Psoas muscle (tissue), 8 donors: ENCODE measurements at regions of chr17 and their contacts with region 1.

Region 1: GRCh38 chr17:82804442-82805191 is 35.2 kb downstream of the ZNF750 start:
- DNase-seq: peak; percentile 94 to 97
- ATAC-seq: peak; percentile 95 to 98 (median 96)
- H3K4me3 ChIP-seq: peak overlapping the region; percentile 36
- H3K27ac ChIP-seq: peak overlapping the region; percentile 82
- H3K4me1 ChIP-seq: peaks cover 16% of the 10 kb centered on the region
- H3K27me3 ChIP-seq: no peaks in the 10 kb centered on the region
- CTCF ChIP-seq: no peak

Region 2: GRCh38 chr17:82839617-82840280 is 35.1 kb after region 1 on chr17 and contains the start of gene ZNF750:
- intact Hi-C with region 1: loop called in 1 of 2 experiments (anchors 5 kb)
- DNase-seq: no peak
- ATAC-seq: peak in 3 of 4 donors; percentile 22 to 41 (median 22)
- H3K4me3 ChIP-seq: peak within 1 kb of the TSS; percentile 41
- H3K27ac ChIP-seq: peak within 1 kb of the TSS; percentile 72
- H3K4me1 ChIP-seq: peaks cover 20% of the 10 kb centered on the region
- H3K27me3 ChIP-seq: no peaks in the 10 kb centered on the region
- CTCF ChIP-seq: no peak
- total RNA-seq, gene ZNF750: 1.8 to 6.3 (median 2.7) TPM in 3 of 4 donors, not detected in the other

Region 3: GRCh38 chr17:82866590-82867444 is 62.2 kb after region 1 on chr17:
- intact Hi-C with region 1: loop called in 1 of 2 experiments (anchors 5 kb)
- DNase-seq: peak; percentile 53 to 77
- ATAC-seq: peak; percentile 62 to 75 (median 70)
- H3K4me3 ChIP-seq: no peak overlapping the region
- H3K27ac ChIP-seq: peak overlapping the region; percentile 61
- H3K4me1 ChIP-seq: peaks cover 29% of the 10 kb centered on the region
- H3K27me3 ChIP-seq: no peaks in the 10 kb centered on the region
- CTCF ChIP-seq: no peak